Activated CD4-positive, alpha-beta memory T cell treated with anti-CD3 and anti-CD28 coated beads for 36 hours (primary cell): ENCODE measurements at regions of chr3 and their contacts with region 1.

Region 1: GRCh38 chr3:128650096-128651050 is at the start of gene RPN1:
- DNase-seq: peak; percentile 97
- H3K4me3 Mint-ChIP-seq: peak within 1 kb of the TSS; percentile 87
- H3K27ac Mint-ChIP-seq: peak within 1 kb of the TSS; percentile 89
- H3K4me1 Mint-ChIP-seq: peaks cover 37% of the 10 kb centered on the region
- H3K27me3 Mint-ChIP-seq: no peaks in the 10 kb centered on the region
- total RNA-seq, gene RPN1: 166 to 168 TPM

Region 2: GRCh38 chr3:128725932-128726690 is 75.7 kb after region 1 on chr3 and contains the start of gene RAB7A:
- CTCF ChIA-PET with region 1: no interaction called
- POLR2A ChIA-PET with region 1: no interaction called
- intact Hi-C with region 1: loop called (anchors 2 kb)
- DNase-seq: peak; percentile 99
- H3K4me3 Mint-ChIP-seq: peak within 1 kb of the TSS; percentile 93
- H3K27ac Mint-ChIP-seq: peak within 1 kb of the TSS; percentile 87
- H3K4me1 Mint-ChIP-seq: peaks cover 50% of the 10 kb centered on the region
- H3K27me3 Mint-ChIP-seq: no peaks in the 10 kb centered on the region
- total RNA-seq, gene RAB7A: 264 to 272 TPM